OCI-LY7 (cell line): ENCODE measurements at regions of chr11 and their contacts with region 1.

Region 1: DNA sequence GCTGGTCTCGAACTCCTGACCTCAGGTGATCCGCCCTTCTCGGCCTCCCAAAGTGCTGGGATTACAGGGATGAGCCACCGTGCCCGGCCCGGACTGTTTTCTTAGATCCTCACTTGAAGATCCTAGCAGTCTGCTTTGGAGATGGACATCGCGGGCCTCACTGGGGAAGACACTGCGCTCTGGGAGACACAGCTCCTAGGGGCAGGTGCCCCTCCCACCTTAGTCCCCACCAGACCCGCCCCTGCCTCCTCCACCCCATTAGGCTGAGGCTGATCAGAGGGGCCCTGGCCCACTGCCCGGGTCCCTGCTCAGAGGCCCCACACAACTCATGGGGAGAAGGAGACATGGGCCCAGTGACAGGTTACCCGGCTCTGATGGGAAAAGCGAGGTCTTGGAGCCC is 11.3 kb upstream of the LTO1 start:
- DNase-seq: no peak
- H3K4me3 ChIP-seq: no peak overlapping the region
- H3K27ac ChIP-seq: no peak overlapping the region
- H3K4me1 ChIP-seq: no peaks in the 10 kb centered on the region
- CTCF ChIP-seq: no peak

Region 2: DNA sequence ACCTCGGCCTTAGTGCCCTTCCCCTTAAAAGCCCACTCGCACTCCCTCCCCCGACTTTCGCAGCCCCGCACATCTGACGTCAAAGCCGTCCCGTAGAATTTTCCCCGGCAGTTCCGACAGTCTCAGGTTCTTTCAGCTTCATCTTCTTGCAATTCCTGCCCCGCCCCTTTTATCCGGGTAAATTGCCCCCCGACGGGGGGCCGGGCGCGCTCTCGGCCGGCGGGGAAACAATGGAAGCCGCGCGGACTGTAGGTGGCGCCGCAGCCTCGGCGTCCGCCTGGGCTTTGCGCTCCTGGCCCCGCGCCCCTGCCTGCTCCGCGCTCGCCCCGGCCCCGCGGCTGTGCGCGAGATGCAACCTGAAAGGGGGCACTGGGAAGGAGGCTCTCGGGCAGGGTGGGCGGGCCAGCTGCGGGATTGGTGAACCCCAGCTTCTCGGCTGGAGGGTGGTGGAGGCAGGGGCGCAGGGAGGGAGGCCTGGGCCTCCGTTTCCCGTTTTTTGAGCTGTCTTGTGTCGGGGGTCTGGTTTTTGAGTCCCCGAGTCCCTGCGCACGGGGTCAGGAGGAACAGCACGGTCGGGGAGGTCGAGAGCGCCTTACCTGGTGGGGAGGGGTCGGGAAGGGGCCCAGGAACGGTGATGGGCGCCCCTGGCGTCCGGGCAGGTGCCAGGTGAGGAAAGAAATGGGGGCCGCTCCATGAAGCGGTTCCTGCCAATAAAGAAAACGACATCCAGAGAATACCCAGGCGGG is 18.2 kb after region 1 on chr11:
- CTCF ChIA-PET with region 1: no interaction called
- POLR2A ChIA-PET with region 1: no interaction called
- intact Hi-C with region 1: no loop called
- DNase-seq: no peak
- H3K4me3 ChIP-seq: no peak overlapping the region
- H3K27ac ChIP-seq: no peak overlapping the region
- H3K4me1 ChIP-seq: no peaks in the 10 kb centered on the region
- CTCF ChIP-seq: no peak

Region 3: DNA sequence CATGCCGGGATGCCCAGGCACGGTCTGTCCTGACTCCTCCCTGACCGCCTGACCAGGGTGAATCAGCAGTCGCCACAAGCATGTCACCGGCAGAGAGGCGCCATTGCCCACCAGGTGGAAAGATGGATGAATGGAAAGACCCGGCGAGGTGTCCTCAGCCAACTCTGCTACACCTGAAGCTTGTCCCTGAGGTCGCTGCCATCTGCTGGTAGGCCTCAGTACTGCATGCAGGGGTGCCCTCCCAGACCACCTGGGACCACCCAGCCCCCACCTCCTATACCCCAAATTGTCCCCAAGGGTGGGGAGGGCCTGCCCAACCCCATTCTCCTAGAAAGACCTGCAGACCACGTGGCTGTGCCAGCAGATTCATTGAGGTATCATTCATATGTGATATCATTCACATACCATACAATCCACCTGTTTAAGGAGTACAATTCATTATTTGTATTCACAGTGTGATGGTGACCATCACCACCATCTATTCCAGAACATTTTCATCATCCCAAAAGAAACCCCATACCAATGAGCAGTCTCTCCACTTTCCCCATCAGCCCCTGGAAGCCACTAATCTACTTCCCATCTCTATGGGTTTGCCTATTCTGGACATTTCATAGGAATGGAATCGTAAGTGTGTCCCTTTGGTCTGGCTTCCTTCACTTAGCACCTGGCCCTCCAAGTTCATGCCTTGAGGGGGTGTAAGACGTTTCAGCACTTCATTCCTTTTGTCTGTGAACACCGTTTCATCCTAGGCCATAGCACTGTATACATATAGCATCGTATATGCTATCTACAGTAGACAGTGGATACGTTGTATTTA is 115.3 kb after region 1 on chr11:
- CTCF ChIA-PET with region 1: no interaction called
- POLR2A ChIA-PET with region 1: no interaction called
- intact Hi-C with region 1: loop called (anchors 1 kb)
- DNase-seq: peak; percentile 27
- H3K4me3 ChIP-seq: no peak overlapping the region
- H3K27ac ChIP-seq: no peak overlapping the region
- H3K4me1 ChIP-seq: no peaks in the 10 kb centered on the region
- CTCF ChIP-seq: peak; percentile 81

Region 4: GRCh38 chr11:69841859-69842698 is 155.6 kb after region 1 on chr11:
- CTCF ChIA-PET with region 1: no interaction called
- POLR2A ChIA-PET with region 1: no interaction called
- intact Hi-C with region 1: loop called (anchors 2 kb)
- DNase-seq: peak; percentile 14
- H3K4me3 ChIP-seq: no peak overlapping the region
- H3K27ac ChIP-seq: no peak overlapping the region
- H3K4me1 ChIP-seq: no peaks in the 10 kb centered on the region
- CTCF ChIP-seq: peak; percentile 75

Region 5: DNA sequence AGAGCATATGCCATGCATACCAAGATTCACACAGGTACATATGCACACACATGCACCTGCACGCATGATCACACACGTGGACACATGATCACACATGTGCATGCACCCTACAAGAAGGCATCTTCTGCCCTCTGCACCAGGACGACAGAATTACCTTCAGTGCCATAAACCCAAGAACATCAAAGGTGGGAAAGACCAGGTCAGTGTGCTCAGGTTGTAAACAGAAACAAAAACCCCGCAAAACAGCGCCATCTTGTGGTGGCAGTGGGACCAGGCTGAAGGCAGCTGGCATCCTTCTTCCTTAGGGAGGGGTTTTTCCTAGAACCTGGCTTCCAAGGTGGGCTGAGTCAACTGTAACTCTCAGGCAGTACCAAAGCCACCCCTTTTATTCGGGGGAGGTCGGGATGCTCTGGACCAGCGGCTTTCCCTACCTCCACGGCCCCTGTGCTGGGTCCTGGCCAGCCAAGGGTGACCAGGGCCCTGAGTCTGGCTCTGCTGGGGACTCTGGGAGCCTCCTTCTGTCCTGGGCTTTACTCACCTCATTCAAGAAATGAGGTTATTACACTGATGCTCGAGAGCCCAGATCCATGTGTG is 202.1 kb after region 1 on chr11:
- CTCF ChIA-PET with region 1: no interaction called
- POLR2A ChIA-PET with region 1: no interaction called
- intact Hi-C with region 1: loop called (anchors 1 kb)
- DNase-seq: peak; percentile 64
- H3K4me3 ChIP-seq: no peak overlapping the region
- H3K27ac ChIP-seq: no peak overlapping the region
- H3K4me1 ChIP-seq: no peaks in the 10 kb centered on the region
- CTCF ChIP-seq: peak; percentile 86